PC-9 (cell line): ENCODE measurements at regions of chr14 and their contacts with region 1.

Region 1: GRCh38 chr14:75307700-75308379 is 29.2 kb downstream of the FOS start:
- DNase-seq: peak; percentile 77 to 97
- H3K4me3 ChIP-seq: no peak overlapping the region
- H3K27ac ChIP-seq: no peak overlapping the region
- H3K4me1 ChIP-seq: peaks cover 15% of the 10 kb centered on the region
- H3K27me3 ChIP-seq: no peaks in the 10 kb centered on the region
- CTCF ChIP-seq: peak; percentile 99

Region 2: DNA sequence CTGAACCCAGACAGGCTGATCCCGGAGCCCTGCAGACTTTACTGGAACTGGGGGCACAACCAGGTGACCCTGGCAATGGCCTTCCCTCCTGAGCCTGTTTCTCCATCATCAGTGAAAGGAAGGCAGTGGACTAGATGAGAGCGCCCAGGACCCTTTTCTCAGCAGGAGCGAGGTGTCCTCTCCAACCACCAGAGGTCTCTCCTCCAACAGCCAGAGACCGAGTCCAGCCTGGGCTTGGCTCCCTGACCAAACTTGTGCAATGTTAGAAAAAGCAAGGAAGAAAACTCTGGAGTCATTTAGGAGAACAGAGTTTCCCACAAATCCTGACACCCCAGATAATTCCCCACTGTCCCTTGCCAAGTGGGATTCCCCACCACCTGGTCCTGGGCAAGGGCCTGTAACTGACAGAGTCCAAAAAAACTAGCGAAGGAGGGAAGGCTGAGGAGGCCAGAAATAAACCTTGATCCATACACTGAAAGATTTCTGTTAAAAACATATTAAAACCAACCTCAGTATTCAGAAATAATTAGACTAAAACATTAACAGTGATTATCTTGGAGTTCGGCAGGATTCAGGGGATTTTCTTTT is 393.8 kb before region 1 on chr14:
- CTCF ChIA-PET with region 1: no interaction called
- POLR2A ChIA-PET with region 1: no interaction called
- intact Hi-C with region 1: loop called (anchors 1 kb)
- DNase-seq: peak; percentile 73 to 82
- H3K4me3 ChIP-seq: no peak overlapping the region
- H3K27ac ChIP-seq: no peak overlapping the region
- H3K4me1 ChIP-seq: peaks cover 8% of the 10 kb centered on the region
- H3K27me3 ChIP-seq: no peaks in the 10 kb centered on the region
- CTCF ChIP-seq: peak; percentile 88

Region 3: DNA sequence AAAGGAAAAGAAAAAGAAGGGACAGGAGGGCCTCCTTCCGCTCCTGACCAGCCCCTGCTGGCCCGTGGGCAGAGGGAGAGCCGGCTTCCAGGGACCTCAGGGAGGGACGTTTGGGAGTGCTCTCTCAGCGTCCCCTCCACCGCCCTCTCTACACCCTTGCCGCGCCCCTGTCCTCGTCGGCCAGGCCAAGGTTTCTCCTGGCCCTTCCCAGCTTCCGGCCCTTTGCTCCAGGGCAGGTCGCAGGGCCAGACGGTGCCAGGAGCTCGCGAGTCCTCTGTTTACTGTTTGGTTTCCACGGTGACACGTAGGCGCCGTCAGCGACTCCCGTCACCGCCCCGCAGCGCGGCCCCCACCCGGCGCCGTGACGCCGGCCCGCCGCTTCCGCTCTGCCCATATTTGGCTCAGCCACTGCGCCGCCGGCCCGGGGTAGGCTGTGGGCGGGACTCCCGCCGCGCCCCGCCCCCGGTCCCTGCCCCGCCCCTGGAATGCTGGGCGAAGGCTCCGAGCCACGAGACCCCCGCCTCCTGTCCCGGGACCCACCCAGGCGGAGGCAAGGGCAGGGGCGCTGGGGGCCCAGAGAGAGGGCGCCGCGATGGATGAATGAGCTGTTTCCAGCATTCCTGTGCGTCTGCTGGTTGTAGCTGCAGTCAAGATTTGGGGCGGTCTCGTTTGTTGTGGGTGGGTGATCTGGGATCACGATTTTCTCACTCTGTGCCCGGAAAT is 13.8 kb before region 1 on chr14:
- CTCF ChIA-PET with region 1: interaction called, 10 read pairs
- POLR2A ChIA-PET with region 1: no interaction called
- intact Hi-C with region 1: no loop called
- DNase-seq: peak; percentile 98 to 100
- H3K4me3 ChIP-seq: peak overlapping the region; percentile 65
- H3K27ac ChIP-seq: peak overlapping the region; percentile 79
- H3K4me1 ChIP-seq: peaks cover 40% of the 10 kb centered on the region
- H3K27me3 ChIP-seq: no peaks in the 10 kb centered on the region
- CTCF ChIP-seq: no peak

Region 4: DNA sequence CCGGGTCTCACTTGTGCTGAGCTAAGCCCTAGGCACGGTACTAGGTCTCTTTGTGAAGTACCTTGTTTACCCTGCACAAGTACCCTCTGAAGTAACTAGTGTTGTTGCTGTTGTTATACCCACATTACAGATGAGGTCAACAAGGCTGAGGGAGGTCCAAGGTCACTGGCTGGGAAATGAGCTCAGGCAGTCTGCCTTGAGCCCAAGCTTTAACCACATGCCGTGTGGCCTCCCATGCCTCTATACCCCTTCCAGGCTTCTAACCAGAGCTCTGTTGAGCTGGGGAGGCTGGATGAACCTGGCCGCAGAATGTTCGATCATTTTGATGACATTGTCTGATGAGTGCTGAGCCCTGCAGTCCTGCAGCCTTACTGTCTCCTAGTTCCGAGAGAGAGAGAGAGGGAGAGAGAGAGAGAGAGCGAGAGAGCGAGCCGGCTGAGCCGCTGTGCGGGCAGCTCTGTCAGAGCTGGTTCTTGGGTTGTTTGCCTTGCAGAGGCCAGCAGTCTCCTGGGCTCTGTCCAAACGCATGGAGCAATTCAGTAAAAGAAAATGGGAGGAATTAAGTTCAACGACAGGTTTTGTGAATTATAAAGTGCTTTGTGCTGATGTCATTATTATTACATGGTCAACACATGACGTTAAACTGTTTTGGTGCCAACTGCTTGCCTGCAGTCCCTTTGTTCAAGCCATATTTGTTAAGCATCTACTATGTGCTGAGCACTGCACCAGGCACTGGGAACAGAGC is 133.1 kb after region 1 on chr14:
- CTCF ChIA-PET with region 1: interaction called, 10 read pairs
- POLR2A ChIA-PET with region 1: no interaction called
- intact Hi-C with region 1: no loop called
- DNase-seq: no peak
- H3K4me3 ChIP-seq: no peak overlapping the region
- H3K27ac ChIP-seq: no peak overlapping the region
- H3K4me1 ChIP-seq: peaks cover 25% of the 10 kb centered on the region
- H3K27me3 ChIP-seq: no peaks in the 10 kb centered on the region
- CTCF ChIP-seq: no peak

Region 5: DNA sequence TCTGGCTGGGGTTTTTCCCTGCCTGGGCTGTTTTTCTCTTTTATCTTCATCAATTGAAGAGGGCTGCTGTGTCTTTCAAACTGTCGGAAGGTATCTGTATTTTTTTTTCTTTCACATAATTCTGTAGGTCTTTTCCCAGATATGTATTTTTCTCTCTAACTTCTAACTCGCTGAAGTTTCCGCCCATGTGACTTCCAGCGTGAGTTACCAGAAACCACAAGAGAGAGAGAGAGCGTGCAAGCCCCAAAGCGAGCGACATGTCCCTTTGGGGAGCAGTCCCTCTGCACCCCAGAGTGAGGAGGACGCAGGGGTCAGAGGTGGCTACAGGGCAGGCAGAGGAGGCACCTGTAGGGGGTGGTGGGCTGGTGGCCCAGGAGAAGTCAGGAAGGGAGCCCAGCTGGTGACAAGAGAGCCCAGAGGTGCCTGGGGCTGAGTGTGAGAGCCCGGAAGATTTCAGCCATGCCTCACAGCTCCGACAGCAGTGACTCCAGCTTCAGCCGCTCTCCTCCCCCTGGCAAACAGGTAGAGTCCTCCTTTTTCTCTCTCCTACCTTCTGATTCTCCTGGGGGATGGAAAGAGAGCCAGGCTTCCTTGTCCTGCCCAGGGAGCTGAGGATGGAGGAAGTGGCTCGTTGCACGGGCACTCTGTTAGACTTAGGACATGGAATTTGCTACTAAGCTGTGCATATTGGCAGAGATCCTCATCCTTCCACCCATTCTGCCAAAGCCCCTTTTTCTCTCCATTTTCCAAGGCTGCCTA is 214.6 kb after region 1 on chr14 and contains the start of gene BATF:
- CTCF ChIA-PET with region 1: interaction called, 4 read pairs
- POLR2A ChIA-PET with region 1: no interaction called
- intact Hi-C with region 1: loop called (anchors 1 kb)
- DNase-seq: peak; percentile 69 to 74
- H3K4me3 ChIP-seq: peak within 1 kb of the TSS; percentile 68
- H3K27ac ChIP-seq: peak within 1 kb of the TSS; percentile 93
- H3K4me1 ChIP-seq: peaks cover 60% of the 10 kb centered on the region
- H3K27me3 ChIP-seq: no peaks in the 10 kb centered on the region
- CTCF ChIP-seq: no peak
- total RNA-seq, gene BATF: 55.7 and 79.0 TPM in 2 replicates

Region 6: DNA sequence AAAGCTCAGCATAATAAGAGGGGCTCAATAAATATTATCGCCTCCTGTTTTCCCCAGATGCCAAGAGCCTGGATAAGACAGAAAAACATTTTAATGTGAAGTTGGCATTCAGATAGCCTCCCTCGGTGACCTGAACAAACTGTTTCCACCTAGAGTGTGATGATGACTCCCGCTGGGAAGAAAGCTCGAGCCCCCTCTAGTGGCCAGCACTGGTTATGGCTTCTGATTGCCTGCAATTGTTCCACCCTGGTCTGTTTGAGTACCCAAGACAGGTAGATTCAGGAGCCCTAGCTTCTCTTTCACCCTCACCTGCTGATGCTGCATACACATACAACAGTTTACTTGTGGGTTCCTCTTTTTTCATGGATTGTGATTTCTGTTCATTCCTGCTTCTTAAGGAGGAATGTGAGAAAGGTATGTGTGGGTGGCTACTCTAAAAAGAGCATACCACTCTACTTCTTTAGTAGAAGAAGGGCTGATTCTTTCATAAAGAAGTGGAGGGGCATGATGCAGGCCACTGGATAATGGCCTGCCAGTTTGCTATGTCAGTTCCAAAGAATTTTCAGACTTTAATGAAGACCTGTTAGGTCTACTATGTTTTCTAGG is 346.4 kb after region 1 on chr14:
- CTCF ChIA-PET with region 1: interaction called, 3 read pairs
- POLR2A ChIA-PET with region 1: no interaction called
- intact Hi-C with region 1: loop called (anchors 1 kb)
- DNase-seq: peak; percentile 58 to 81
- H3K4me3 ChIP-seq: no peak overlapping the region
- H3K27ac ChIP-seq: no peak overlapping the region
- H3K4me1 ChIP-seq: peaks cover 6% of the 10 kb centered on the region
- H3K27me3 ChIP-seq: no peaks in the 10 kb centered on the region
- CTCF ChIP-seq: peak; percentile 95

Region 7: DNA sequence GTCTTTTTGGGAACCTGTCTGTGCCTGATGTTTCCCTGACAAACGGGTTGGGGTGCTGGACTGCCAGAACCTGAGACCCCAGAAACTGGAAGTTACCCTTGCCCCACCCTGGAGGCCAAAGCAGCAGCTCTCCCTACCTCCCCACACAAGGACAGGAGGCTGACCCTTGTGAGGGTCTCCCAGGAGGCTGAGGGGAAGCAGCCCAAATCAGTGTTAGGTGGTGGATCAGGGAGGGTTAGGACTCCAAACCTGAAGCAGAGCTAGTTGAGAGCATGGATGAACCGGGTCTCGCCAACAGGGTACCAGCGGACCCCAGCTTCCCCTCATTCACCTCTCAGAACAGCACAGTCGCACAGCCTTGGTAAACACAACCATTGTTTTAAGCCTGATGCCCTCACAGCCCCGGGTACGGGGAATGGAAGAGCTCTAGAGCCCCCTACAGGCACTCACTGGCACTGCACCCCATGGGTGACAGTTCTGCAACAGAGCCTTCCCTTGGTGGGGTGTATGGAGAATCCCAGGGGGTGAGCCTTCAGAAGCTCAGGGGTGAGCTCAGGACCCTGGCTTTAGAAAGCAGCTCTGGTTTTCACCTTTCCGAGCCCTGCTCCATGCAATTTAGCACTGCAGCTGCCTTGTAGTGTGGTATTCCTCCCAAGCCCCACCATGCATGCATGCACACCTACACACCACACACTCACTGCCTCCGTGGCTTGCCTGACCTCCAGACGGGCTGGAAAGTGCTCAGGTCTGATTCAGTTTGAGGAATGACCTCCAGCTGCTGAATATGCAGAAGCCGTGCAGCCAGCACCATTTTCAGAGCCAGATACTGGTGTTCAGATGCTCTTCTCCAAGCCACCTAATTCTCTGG is 1079.3 kb after region 1 on chr14:
- CTCF ChIA-PET with region 1: no interaction called
- POLR2A ChIA-PET with region 1: no interaction called
- intact Hi-C with region 1: loop called (anchors 5 kb)
- DNase-seq: peak; percentile 55 to 87
- H3K4me3 ChIP-seq: no peak overlapping the region
- H3K27ac ChIP-seq: no peak overlapping the region
- H3K4me1 ChIP-seq: no peaks in the 10 kb centered on the region
- H3K27me3 ChIP-seq: peaks cover 97% of the 10 kb centered on the region
- CTCF ChIP-seq: peak; percentile 100